Transverse colon (tissue), 4 donors: ENCODE measurements at regions of chr12 and their contacts with region 1.

Region 1: DNA sequence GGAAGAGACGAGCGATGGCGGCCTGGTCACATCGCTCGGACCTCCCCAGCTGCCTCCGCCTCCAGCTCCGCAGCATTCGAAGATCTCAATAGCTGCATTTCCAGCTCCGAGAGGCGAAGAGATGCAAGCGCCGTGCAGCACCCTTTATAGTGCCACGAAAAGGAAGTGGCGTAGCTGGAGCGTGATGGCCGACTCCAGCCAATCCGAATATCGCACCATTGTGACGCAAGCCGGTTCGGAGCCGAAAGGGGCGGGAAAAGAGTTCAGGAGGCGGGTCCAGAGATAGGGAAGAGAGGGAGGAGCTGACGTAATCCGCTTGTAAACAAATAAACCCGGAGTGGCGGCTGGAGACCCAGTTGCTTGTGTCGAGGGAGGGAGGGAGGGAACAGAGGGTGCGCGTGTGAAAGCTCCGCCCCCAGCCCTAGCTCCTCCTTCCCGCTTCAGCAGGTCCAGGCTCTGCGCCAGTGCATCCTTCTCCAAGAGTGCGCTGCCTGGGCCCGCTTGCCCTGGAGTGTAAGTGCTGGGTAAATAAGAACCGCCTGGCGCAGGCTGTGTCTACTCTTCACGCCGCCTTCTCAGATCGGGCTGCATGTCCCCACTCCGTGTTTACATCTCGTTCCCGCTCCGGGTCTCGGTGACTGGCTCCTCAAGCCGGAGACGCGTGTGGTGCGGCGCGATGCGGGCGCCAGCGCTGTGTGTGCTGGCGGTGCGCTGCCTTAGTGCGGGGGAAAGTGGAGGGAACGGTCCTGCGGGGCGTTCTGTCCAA is at the start of gene BTG1:
- DNase-seq: peak; percentile 100
- H3K4me3 ChIP-seq: peak within 1 kb of the TSS; percentile 74 to 98 (median 96)
- H3K27ac ChIP-seq: peak within 1 kb of the TSS; percentile 98 to 100 (median 99)
- H3K4me1 ChIP-seq: peaks cover 0 to 30% (median 2%) of the 10 kb centered on the region in 4 donors
- H3K27me3 ChIP-seq: no peaks in the 10 kb centered on the region
- CTCF ChIP-seq: no peak
- EP300 ChIP-seq: no peak
- POLR2A ChIP-seq: peak; percentile 99
- total RNA-seq, gene BTG1: 28.3 to 111 (median 78.1) TPM

Region 2: GRCh38 chr12:91382081-91382543 is 763.8 kb before region 1 on chr12:
- in situ Hi-C with region 1: loop called in 3 of 4 experiments (anchors 10 to 25 kb)
- intact Hi-C with region 1: no loop called
- DNase-seq: peak; percentile 86
- H3K4me3 ChIP-seq: peak overlapping the region; percentile 7 to 40 (median 22)
- H3K27ac ChIP-seq: peak overlapping the region; percentile 53 to 71 (median 60)
- H3K4me1 ChIP-seq: peaks cover 0 to 27% (median 1%) of the 10 kb centered on the region in 4 donors
- H3K27me3 ChIP-seq: no peaks in the 10 kb centered on the region
- CTCF ChIP-seq: peak; percentile 83 to 94 (median 87)
- EP300 ChIP-seq: no peak
- POLR2A ChIP-seq: no peak

Region 3: GRCh38 chr12:92034858-92035401 is 111.0 kb before region 1 on chr12:
- in situ Hi-C with region 1: no loop called
- intact Hi-C with region 1: loop called (anchors 10 kb)
- DNase-seq: peak; percentile 73
- H3K4me3 ChIP-seq: peak overlapping the region in 3 of 4 donors; percentile 5 to 35 (median 11)
- H3K27ac ChIP-seq: peak overlapping the region; percentile 72 to 80 (median 80)
- H3K4me1 ChIP-seq: peaks cover 8 to 52% (median 22%) of the 10 kb centered on the region in 4 donors
- H3K27me3 ChIP-seq: no peaks in the 10 kb centered on the region
- CTCF ChIP-seq: no peak
- EP300 ChIP-seq: no peak
- POLR2A ChIP-seq: peak; percentile 57

Region 4: DNA sequence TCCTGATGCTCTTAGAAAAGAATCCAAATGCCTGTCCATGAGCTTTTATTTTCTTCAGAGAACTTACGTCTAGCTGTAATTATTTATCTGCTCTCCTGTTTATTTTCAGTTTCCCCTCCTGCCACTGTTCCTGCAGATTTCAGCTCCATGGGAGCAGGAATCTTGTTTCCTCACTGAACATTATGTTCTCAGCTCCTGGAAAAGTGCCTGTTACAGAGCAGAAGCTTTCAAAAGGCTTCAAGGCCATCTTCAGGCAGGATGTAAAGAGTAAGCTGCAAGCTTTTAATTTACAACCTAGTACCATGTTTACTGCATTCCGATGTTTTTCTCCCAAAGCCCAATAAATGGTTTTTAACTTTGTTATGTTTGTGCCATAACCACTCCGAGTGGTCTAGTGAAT is 98.1 kb after region 1 on chr12:
- in situ Hi-C with region 1: no loop called
- intact Hi-C with region 1: loop called (anchors 10 kb)
- DNase-seq: no peak
- H3K4me3 ChIP-seq: no peak overlapping the region
- H3K27ac ChIP-seq: peak overlapping the region; percentile 47 to 72 (median 66)
- H3K4me1 ChIP-seq: peaks cover 0 to 18% (median 0%) of the 10 kb centered on the region in 4 donors
- H3K27me3 ChIP-seq: no peaks in the 10 kb centered on the region
- CTCF ChIP-seq: no peak
- EP300 ChIP-seq: peak; percentile 55
- POLR2A ChIP-seq: no peak

Region 5: GRCh38 chr12:92561543-92561899 is 415.6 kb after region 1 on chr12:
- in situ Hi-C with region 1: loop called (anchors 5 to 25 kb)
- intact Hi-C with region 1: no loop called
- DNase-seq: peak; percentile 35
- H3K4me3 ChIP-seq: no peak overlapping the region
- H3K27ac ChIP-seq: peak overlapping the region; percentile 37 to 69 (median 65)
- H3K4me1 ChIP-seq: peaks cover 0 to 20% (median 8%) of the 10 kb centered on the region in 4 donors
- H3K27me3 ChIP-seq: no peaks in the 10 kb centered on the region
- CTCF ChIP-seq: no peak
- EP300 ChIP-seq: no peak
- POLR2A ChIP-seq: no peak

Region 6: DNA sequence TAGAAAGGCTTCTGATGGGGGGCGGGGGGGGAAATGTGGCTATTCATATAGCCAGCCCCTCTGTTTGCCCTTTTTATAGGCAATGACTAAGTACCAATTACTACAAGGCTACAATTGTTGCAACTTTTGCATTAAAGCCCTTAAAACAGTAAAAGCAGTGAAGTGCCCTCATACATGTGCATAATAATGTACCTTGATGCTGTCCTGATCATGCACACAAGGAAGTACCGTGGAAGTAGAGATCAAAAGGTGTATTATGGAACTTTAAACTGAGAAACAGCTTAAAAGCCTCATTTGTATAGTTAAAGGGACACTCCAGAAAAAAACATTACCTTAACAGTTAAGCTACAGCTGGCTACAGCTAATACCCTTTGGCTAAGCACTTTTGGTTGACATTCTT is 668.7 kb after region 1 on chr12:
- in situ Hi-C with region 1: no loop called
- intact Hi-C with region 1: no loop called
- DNase-seq: no peak
- H3K4me3 ChIP-seq: no peak overlapping the region
- H3K27ac ChIP-seq: no peak overlapping the region
- H3K4me1 ChIP-seq: no peaks in the 10 kb centered on the region
- H3K27me3 ChIP-seq: no peaks in the 10 kb centered on the region
- CTCF ChIP-seq: no peak
- EP300 ChIP-seq: no peak
- POLR2A ChIP-seq: no peak